Activated CD4-positive, alpha-beta memory T cell treated with anti-CD3 and anti-CD28 coated beads, Interleukin-2, amount 10 ng/mL, durations not matched to agents 7 days and 5 days (primary cell): ENCODE measurements at regions of chr5 and their contacts with region 1.

Region 1: DNA sequence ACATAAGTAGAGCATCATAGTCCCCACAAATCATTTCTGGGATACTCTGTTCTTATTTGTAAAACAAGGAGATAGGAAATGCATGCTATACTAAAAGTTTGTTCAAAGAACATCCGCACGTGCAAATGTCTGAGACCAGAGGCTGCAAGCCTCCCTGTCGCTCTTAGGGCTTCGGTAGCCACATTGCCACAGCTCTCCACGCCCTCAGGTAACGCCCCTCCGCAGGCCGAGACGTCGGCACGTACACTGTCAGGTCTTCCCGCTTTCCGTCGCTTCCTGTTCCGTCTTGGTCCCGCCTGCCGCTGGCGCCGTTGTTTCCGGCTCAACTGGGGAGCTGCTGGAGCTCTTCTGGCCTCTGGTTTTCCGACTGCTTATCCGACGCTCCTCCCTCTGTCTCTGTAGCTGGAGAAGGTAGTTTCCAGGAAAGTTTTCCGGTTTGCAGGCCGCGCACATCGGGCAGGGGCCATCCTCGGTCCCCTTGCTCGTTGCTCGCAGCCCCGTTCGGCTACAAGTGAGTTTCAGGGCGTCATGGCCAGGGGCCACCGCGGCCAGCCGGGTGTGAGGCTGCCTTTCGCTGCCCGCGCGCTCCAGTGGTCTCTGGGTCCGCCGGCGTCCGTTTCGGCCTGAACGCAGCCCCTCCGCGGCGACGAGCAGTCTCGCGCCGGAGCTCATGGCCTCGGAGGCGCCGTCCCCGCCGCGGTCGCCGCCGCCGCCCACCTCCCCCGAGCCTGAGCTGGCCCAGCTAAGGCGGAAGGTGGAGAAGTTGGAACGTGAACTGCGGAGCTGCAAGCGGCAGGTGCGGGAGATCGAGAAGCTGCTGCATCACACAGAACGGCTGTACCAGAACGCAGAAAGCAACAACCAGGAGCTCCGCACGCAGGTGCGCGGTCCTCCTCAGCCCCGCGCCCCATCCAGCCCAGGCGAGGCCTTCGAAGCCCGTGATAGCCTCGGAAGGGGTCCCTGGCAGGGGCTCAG is at the start of gene AGGF1:
- DNase-seq: peak; percentile 94
- H3K4me3 Mint-ChIP-seq: peak within 1 kb of the TSS; percentile 89
- H3K27ac Mint-ChIP-seq: peak within 1 kb of the TSS; percentile 89
- H3K4me1 Mint-ChIP-seq: peaks cover 39% of the 10 kb centered on the region
- H3K27me3 Mint-ChIP-seq: peaks cover 3% of the 10 kb centered on the region
- total RNA-seq, gene AGGF1: 26.4 to 28.6 TPM

Region 2: GRCh38 chr5:76641514-76642120 is 388.8 kb before region 1 on chr5:
- CTCF ChIA-PET with region 1: no interaction called
- POLR2A ChIA-PET with region 1: no interaction called
- DNase-seq: peak; percentile 68
- H3K4me3 Mint-ChIP-seq: no peak overlapping the region
- H3K27ac Mint-ChIP-seq: no peak overlapping the region
- H3K4me1 Mint-ChIP-seq: peaks cover 16% of the 10 kb centered on the region
- H3K27me3 Mint-ChIP-seq: no peaks in the 10 kb centered on the region

Region 3: DNA sequence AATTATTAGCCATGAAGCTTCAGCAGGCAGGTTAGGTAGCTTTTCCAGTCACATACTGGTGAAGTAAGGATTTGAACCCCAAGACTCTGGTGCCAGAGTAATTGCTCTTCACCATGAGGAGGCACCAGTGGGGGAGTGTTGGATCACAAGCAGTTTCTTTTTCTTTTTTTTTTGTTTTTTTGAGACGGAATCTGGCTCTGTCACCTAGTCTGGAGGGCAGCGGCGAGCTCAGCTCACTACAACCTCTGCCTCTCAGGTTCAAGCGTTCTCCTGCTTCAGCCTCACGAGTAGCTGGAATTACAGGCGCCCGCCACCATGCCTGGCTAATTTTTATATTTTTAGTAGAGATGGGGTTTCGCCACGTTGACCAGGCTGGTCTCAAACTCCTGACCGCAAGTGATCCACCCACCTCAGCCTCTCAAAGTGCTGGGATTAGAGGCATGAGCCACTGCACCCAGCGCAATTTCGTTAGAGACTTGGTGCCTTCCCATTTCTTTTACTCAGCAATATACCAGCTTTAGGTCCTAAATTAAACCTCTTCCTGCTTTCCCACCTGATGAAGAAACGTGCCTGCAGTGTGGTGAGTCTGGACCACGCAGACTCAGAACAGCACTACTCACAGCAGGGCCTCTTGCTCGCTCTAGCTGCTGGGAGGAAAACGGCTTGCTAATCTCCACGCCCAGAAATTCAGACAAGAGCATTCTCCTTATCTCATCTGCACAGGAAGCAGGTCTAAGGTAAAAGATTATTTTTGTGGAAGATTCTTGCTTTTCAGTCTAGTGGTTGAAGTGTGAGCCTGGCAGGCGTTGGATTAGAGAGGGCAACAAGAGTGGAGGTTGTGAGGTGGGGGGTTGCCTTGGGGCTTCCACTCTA is 180.7 kb before region 1 on chr5 and contains the start of gene S100Z:
- CTCF ChIA-PET with region 1: no interaction called
- POLR2A ChIA-PET with region 1: interaction called, 11 read pairs
- DNase-seq: peak; percentile 67
- H3K4me3 Mint-ChIP-seq: peak within 1 kb of the TSS; percentile 53
- H3K27ac Mint-ChIP-seq: peak within 1 kb of the TSS; percentile 79
- H3K4me1 Mint-ChIP-seq: peaks cover 50% of the 10 kb centered on the region
- H3K27me3 Mint-ChIP-seq: peaks cover 4% of the 10 kb centered on the region
- total RNA-seq, gene S100Z: 2.5 to 2.6 TPM

Region 4: DNA sequence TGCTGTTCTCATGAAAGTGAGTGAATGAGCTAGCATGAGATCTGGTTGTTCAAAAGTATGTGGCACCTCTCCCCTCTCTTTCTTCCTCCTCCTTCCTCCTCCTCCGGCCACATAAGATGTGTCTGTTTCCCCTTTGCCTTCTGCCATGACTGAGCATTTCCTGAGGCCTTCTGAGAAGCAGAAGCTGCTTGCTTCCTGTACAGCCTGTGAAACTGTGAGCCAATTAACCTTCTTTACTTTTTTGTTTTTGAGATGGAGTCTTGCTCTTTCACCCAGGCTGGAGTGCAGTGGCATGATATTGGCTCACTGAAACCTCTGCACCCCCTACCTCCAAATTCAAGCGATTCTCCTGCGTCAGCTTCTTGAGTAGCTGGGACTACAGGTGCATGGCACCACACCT is 174.4 kb before region 1 on chr5:
- CTCF ChIA-PET with region 1: no interaction called
- POLR2A ChIA-PET with region 1: interaction called, 12 read pairs
- DNase-seq: peak; percentile 63
- H3K4me3 Mint-ChIP-seq: peak overlapping the region; percentile 11
- H3K27ac Mint-ChIP-seq: peak overlapping the region; percentile 93
- H3K4me1 Mint-ChIP-seq: peaks cover 51% of the 10 kb centered on the region
- H3K27me3 Mint-ChIP-seq: no peaks in the 10 kb centered on the region

Region 5: GRCh38 chr5:77006124-77006523 is 24.3 kb before region 1 on chr5:
- CTCF ChIA-PET with region 1: no interaction called
- POLR2A ChIA-PET with region 1: no interaction called
- DNase-seq: no peak
- H3K4me3 Mint-ChIP-seq: no peak overlapping the region
- H3K27ac Mint-ChIP-seq: no peak overlapping the region
- H3K4me1 Mint-ChIP-seq: no peaks in the 10 kb centered on the region
- H3K27me3 Mint-ChIP-seq: peaks cover 46% of the 10 kb centered on the region

Region 6: DNA sequence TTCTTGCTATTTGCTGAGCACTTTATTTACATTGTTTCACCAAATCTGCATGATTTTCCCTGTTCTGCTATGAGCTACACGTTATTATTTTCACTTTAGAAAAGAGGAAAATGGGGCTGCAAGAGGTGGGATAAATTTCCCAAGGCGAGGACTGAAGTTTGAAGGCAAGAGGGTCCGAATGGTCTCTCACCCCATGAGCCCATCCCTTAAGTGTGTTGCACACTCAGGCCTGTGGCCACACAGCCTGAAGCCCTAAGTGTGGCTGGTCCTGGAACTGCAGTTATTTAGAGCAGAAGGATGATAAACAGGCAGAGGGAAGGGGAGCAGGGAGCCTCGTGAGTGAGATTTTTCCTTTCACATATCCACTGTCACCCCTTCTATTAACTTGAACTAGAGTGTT is 187.9 kb after region 1 on chr5:
- CTCF ChIA-PET with region 1: no interaction called
- POLR2A ChIA-PET with region 1: no interaction called
- DNase-seq: no peak
- H3K4me3 Mint-ChIP-seq: no peak overlapping the region
- H3K27ac Mint-ChIP-seq: no peak overlapping the region
- H3K4me1 Mint-ChIP-seq: no peaks in the 10 kb centered on the region
- H3K27me3 Mint-ChIP-seq: peaks cover 45% of the 10 kb centered on the region